ENCODE measurements at regions of chr20 and their contacts with region 1.

Region 1: GRCh38 chr20:7879883-7880282 is 60.4 kb downstream of the HAO1 start:
- DNase-seq: no peak
- H3K4me3 ChIP-seq: no peak overlapping the region
- H3K27ac ChIP-seq: no peak overlapping the region
- H3K4me1 ChIP-seq: no peaks in the 10 kb centered on the region
- H3K27me3 ChIP-seq: no peaks in the 10 kb centered on the region
- CTCF ChIP-seq: no peak
- POLR2A ChIP-seq: no peak

Region 2: GRCh38 chr20:7505152-7505834 is 374.6 kb before region 1 on chr20:
- intact Hi-C with region 1: no loop called
- DNase-seq: no peak
- H3K4me3 ChIP-seq: no peak overlapping the region
- H3K27ac ChIP-seq: no peak overlapping the region
- H3K4me1 ChIP-seq: no peaks in the 10 kb centered on the region
- H3K27me3 ChIP-seq: no peaks in the 10 kb centered on the region
- CTCF ChIP-seq: no peak
- POLR2A ChIP-seq: no peak

Region 3: DNA sequence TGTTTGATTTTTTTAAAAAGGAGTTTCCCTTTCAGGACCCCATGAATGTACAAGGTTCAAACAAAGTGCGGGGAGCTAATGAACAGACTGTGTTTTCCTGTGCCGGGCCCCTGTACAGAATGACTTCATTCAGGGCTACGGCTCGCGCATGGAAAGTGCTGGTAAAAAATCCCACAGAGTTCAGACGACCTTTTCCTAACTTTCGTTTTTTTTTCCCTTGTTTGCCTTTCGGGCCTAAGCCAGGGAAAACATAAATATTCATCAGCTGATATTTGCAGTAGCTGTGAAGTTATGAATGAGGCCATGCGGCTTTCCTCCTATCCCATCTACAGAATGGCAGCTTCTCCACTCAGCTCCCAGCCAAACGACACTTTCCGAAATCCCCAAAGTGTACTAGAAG is 13.6 kb before region 1 on chr20:
- intact Hi-C with region 1: no loop called
- DNase-seq: no peak
- H3K4me3 ChIP-seq: no peak overlapping the region
- H3K27ac ChIP-seq: no peak overlapping the region
- H3K4me1 ChIP-seq: no peaks in the 10 kb centered on the region
- H3K27me3 ChIP-seq: no peaks in the 10 kb centered on the region
- CTCF ChIP-seq: no peak
- POLR2A ChIP-seq: no peak

Region 4: GRCh38 chr20:7908905-7909304 is 29.0 kb after region 1 on chr20:
- intact Hi-C with region 1: loop called (anchors 2 kb)
- DNase-seq: no peak
- H3K4me3 ChIP-seq: no peak overlapping the region
- H3K27ac ChIP-seq: no peak overlapping the region
- H3K4me1 ChIP-seq: peaks cover 0 to 4% of the 10 kb centered on the region in 2 donors
- H3K27me3 ChIP-seq: no peaks in the 10 kb centered on the region
- CTCF ChIP-seq: no peak
- POLR2A ChIP-seq: no peak

Region 5: GRCh38 chr20:8568075-8568474 is 688.2 kb after region 1 on chr20:
- intact Hi-C with region 1: loop called (anchors 5 kb)
- DNase-seq: no peak
- H3K4me3 ChIP-seq: no peak overlapping the region
- H3K27ac ChIP-seq: peak overlapping the region; percentile 4 to 79
- H3K4me1 ChIP-seq: peaks cover 0 to 5% of the 10 kb centered on the region in 2 donors
- H3K27me3 ChIP-seq: no peaks in the 10 kb centered on the region
- CTCF ChIP-seq: no peak
- POLR2A ChIP-seq: no peak